Gastrocnemius medialis (tissue), 4 donors: ENCODE measurements at regions of chr18 and their contacts with region 1.

Region 1: DNA sequence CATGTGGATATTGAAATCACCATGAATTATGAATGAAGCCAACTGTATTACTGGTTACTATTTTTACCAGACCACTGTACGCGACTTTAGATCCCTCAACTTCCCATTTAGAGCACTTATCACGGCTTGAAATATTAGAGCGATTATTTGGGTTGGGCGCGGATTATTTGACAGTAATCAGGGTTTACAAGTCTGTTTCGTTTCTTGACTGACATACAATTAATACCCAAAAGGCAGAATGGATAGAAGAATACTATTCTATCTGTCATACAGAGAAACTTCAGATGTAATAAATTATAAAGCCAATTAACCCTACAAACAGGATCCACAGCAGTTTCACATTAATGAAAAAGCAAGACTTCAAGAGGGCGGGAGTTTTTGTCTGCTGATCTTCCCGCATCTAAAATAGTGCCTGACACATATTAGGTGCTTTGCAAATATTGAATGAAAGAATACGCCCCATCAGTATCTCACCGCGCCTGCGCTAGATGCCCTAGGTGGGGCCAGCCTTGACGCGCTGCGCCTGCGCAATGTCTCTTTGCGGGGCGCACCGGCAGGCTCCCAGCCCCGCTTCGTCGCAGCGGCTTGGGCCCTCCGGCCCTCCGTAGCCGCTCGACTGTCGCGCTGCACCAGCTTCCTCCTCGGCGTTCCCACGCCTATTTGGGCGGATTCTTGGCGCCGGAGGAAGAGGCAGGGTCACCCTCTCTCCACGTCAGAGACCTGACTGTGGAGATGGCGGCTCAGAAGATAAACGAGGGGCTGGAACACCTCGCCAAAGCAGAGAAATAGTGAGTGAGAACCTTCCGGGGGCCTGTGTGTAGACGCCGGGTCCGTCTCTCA is at the start of gene NAPG:
- DNase-seq: peak; percentile 74 to 85
- ATAC-seq: peak; percentile 90 to 93
- H3K4me3 ChIP-seq: peak within 1 kb of the TSS; percentile 73 to 99 (median 83)
- H3K27ac ChIP-seq: peak within 1 kb of the TSS; percentile 85 to 96 (median 89)
- H3K4me1 ChIP-seq: peaks cover 12 to 17% of the 10 kb centered on the region in 2 donors
- H3K27me3 ChIP-seq: no peaks in the 10 kb centered on the region
- CTCF ChIP-seq: no peak
- POLR2A ChIP-seq: peak; percentile 32 to 38
- total RNA-seq, gene NAPG: 13.8 to 29.6 (median 19.5) TPM

Region 2: GRCh38 chr18:9808295-9809241 is 717.0 kb before region 1 on chr18:
- in situ Hi-C with region 1: loop called in 1 of 4 experiments (anchors 25 kb)
- intact Hi-C with region 1: loop called (anchors 10 kb)
- DNase-seq: peak in 1 of 2 donors; percentile 42
- ATAC-seq: peak; percentile 15 to 59
- H3K4me3 ChIP-seq: no peak overlapping the region
- H3K27ac ChIP-seq: peak overlapping the region in 3 of 4 donors; percentile 31 to 35 (median 34)
- H3K4me1 ChIP-seq: peaks cover 35 to 51% of the 10 kb centered on the region in 2 donors
- H3K27me3 ChIP-seq: no peaks in the 10 kb centered on the region
- CTCF ChIP-seq: no peak
- POLR2A ChIP-seq: no peak

Region 3: DNA sequence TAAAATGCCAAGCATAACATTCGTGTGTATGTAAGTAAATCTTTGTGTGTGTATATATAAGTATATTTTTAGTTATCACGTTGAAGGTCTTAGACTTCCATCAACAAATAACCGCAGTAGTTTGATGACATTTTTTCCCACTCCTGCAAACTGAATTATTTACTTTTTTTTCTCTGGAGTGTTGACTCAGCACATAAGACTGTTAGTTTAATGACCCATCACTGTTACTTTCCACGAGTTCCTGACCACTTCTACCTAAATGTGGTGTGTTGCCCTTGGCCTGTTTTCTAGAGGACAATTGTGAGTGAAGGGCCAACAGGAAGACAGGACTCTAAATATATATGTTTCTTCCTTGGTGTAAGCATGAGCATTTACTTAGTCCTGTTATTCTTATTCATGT is 711.2 kb before region 1 on chr18:
- in situ Hi-C with region 1: loop called in 1 of 4 experiments (anchors 25 kb)
- intact Hi-C with region 1: loop called (anchors 10 kb)
- DNase-seq: no peak
- ATAC-seq: no peak
- H3K4me3 ChIP-seq: no peak overlapping the region
- H3K27ac ChIP-seq: no peak overlapping the region
- H3K4me1 ChIP-seq: peaks cover 51 to 59% of the 10 kb centered on the region in 2 donors
- H3K27me3 ChIP-seq: no peaks in the 10 kb centered on the region
- CTCF ChIP-seq: no peak
- POLR2A ChIP-seq: no peak

Region 4: DNA sequence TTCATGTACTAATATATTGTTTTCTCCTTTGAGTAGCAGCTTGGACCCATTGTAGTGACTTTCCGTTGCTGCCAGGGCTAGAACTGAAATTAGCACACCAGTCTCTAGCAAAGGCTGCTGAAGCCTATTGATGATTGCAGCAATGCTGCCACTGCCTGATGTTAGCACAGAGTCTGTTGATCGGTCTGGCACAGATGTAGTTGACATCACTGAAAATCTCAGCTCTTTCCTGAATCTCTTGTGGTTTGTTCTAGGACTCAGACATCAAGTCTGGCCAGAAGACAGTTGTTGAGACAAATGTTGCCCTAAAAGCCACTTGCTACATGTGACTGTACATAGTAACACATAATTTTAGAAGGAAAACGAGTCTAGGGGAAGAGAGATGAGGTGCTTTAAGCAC is 564.5 kb before region 1 on chr18:
- in situ Hi-C with region 1: loop called in 1 of 4 experiments (anchors 10 kb)
- intact Hi-C with region 1: no loop called
- DNase-seq: no peak
- ATAC-seq: peak; percentile 17 to 31
- H3K4me3 ChIP-seq: no peak overlapping the region
- H3K27ac ChIP-seq: no peak overlapping the region
- H3K4me1 ChIP-seq: no peaks in the 10 kb centered on the region
- H3K27me3 ChIP-seq: no peaks in the 10 kb centered on the region
- CTCF ChIP-seq: no peak
- POLR2A ChIP-seq: no peak

Region 5: DNA sequence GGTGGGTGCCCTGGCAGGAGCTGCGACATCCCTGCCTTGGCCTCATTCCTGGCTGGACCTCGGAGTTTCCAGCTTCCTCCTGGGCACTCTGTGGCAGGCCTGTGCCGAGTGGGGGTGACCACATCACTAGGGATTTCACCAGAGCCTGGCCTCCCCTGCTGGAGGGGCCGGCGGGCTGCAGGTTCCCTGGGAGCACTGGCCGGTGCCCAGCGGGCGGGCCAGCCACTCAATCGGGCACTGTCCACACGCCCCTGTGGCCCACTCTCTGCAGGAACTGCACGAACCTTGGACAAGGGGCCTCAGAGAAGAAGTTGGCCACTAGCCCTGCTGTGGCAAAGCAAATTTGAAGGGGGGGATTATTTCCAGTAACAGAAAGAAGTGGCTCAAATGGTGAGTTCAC is 181.8 kb before region 1 on chr18:
- in situ Hi-C with region 1: no loop called
- intact Hi-C with region 1: no loop called
- DNase-seq: no peak
- ATAC-seq: no peak
- H3K4me3 ChIP-seq: no peak overlapping the region
- H3K27ac ChIP-seq: no peak overlapping the region
- H3K4me1 ChIP-seq: no peaks in the 10 kb centered on the region
- H3K27me3 ChIP-seq: no peaks in the 10 kb centered on the region
- CTCF ChIP-seq: no peak
- POLR2A ChIP-seq: no peak

Region 6: GRCh38 chr18:10563886-10564285 is 38.3 kb after region 1 on chr18:
- in situ Hi-C with region 1: no loop called
- intact Hi-C with region 1: no loop called
- DNase-seq: peak in 1 of 2 donors; percentile 36
- ATAC-seq: peak; percentile 30 to 72
- H3K4me3 ChIP-seq: no peak overlapping the region
- H3K27ac ChIP-seq: no peak overlapping the region
- H3K4me1 ChIP-seq: peaks cover 3 to 7% of the 10 kb centered on the region in 2 donors
- H3K27me3 ChIP-seq: no peaks in the 10 kb centered on the region
- CTCF ChIP-seq: no peak
- POLR2A ChIP-seq: no peak

Region 7: DNA sequence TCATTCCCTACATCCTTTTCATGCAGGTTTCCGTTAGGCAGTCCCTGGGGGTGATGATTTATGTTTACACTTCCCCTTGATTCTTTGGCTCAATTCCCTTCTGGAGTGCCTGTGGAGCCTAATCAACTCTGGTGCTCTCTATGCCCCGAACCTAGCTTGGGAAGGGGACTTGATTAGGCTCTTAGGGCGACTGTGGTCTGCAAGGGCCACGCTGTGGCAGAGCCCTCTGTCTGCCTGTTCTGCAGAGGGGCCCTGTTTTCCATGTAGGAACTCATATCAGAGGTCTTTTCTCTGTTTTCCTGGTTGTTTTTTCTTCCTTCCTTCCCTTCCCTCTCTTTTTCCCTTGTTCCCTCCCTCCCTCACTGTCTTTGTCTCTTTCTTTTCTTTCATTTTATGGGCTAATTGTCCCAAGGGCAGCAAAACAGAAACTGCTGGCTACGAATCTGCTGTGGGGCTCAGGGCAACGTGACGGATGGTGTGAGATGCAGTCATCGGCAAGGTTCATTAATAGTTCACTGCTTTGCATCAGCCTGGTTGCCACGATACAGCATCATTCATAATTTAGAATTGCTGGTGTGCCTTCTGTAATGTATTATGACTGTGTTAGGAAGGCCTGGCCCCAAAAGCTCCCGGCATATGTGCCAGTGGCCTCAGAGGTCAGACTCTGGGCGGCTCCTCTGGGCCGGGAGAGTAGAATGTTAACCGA is 134.7 kb after region 1 on chr18:
- in situ Hi-C with region 1: no loop called
- intact Hi-C with region 1: no loop called
- DNase-seq: peak; percentile 2 to 16
- ATAC-seq: peak in 1 of 2 donors; percentile 44
- H3K4me3 ChIP-seq: no peak overlapping the region
- H3K27ac ChIP-seq: no peak overlapping the region
- H3K4me1 ChIP-seq: no peaks in the 10 kb centered on the region
- H3K27me3 ChIP-seq: no peaks in the 10 kb centered on the region
- CTCF ChIP-seq: no peak
- POLR2A ChIP-seq: no peak

Region 8: DNA sequence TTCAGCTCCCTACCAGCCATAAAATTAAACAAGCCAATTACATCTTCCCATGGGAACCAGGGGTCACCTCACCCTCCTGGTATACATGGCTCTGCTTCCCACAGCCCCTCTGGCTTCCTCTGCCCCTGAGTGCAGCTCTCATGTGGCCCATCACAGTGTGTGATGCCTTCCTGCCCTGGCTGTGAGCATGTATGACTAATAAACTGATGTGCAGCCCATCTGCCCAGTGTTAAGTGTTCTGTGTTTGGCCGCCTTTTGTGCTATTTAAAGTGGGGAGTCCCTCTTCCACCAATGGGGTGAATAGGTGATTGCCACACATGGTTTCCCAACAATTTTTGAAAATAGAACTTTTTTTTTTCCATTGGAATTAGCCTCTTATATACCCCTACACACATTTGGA is 711.5 kb after region 1 on chr18:
- in situ Hi-C with region 1: no loop called
- intact Hi-C with region 1: no loop called
- DNase-seq: no peak
- ATAC-seq: no peak
- H3K4me3 ChIP-seq: no peak overlapping the region
- H3K27ac ChIP-seq: no peak overlapping the region
- H3K4me1 ChIP-seq: no peaks in the 10 kb centered on the region
- H3K27me3 ChIP-seq: no peaks in the 10 kb centered on the region
- CTCF ChIP-seq: no peak
- POLR2A ChIP-seq: no peak